GM10248 (cell line): ENCODE measurements at regions of chr2 and their contacts with region 1.

Region 1: DNA sequence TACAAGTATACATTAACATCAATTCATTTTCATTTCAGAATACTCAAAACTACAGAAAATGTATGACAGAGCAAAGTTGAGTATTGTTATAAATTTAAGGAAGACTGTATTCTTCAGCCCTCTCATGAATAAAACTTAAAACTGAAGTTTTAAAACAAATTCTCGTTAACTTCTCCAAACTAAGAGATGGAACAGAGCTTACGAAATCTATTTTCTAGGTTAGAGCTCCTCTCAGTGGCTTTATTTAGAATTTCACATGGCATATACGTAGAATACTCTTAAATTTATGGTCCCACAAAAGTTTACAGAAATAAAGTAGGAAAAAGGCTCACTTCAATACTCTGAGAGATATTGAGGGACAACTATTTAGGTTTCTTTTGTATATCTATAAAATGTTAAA is 612.1 kb downstream of the KCNJ3 start:
- DNase-seq: no peak
- CTCF ChIP-seq: peak; percentile 52

Region 2: DNA sequence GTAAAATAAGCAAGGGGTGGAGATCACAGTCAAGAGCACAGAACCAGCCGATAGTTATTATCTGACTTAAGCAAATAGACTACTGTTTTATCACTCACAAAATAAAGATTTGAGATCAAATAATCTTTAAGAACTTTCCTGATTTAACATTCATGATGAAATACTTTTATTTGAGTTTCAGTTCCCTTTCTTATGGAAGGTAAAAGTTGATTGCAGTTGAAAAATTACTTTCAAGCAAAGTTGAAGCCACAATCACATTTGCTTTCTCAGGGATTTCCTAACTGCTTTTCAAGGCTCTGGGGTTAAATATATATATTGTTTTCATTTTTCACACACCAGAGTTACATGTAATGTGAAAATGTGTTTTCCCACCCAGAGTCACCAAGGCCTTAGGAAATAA is 12.6 kb before region 1 on chr2:
- CTCF ChIA-PET with region 1: interaction called, 10 read pairs
- POLR2A ChIA-PET with region 1: no interaction called
- DNase-seq: no peak
- CTCF ChIP-seq: no peak